Common myeloid progenitor, CD34-positive (primary cell): ENCODE measurements at regions of chr5 and their contacts with region 1.

Region 1: DNA sequence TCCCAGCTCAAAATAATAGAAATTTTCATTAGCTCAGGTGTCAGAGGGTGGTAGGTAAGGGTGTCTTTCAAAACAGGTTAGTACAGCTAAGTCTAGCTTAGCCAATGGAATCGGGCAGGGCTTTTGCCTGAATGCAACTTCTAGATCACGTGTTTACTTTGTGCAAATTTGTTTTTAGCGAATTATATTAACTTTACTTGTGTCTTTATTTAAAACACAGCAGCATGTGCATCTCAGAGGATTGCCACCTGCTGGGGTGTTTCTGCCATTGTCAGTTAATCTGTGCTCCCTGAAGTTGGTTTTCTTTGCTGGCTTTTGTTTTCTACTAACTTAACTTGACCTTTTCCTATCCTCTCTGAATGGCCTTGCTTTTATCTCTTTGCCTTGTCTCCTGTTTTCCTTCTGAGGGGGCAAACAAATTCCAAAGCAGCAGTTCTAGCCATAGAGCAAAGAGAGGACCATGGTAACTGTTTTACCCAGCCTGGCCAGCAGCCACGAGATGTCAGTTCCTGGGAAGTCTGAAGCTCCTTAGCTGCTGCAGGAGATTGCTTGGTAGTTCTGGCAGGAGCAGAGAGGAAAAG is 67.6 kb downstream of the ARHGEF28 start:
- DNase-seq: peak; percentile 36 to 61 (median 54)
- H3K4me3 ChIP-seq: no peak overlapping the region
- H3K27ac ChIP-seq: no peak overlapping the region
- H3K4me1 ChIP-seq: peaks cover 0 to 8% (median 5%) of the 10 kb centered on the region in 4 experiments
- H3K27me3 ChIP-seq: no peaks in the 10 kb centered on the region

Region 2: GRCh38 chr5:73596705-73597328 is 96.8 kb before region 1 on chr5:
- CTCF ChIA-PET with region 1: interaction called, 50 read pairs
- POLR2A ChIA-PET with region 1: no interaction called
- DNase-seq: peak; percentile 58 to 71 (median 66)
- H3K4me3 ChIP-seq: no peak overlapping the region
- H3K27ac ChIP-seq: no peak overlapping the region
- H3K4me1 ChIP-seq: no peaks in the 10 kb centered on the region
- H3K27me3 ChIP-seq: no peaks in the 10 kb centered on the region

Region 3: DNA sequence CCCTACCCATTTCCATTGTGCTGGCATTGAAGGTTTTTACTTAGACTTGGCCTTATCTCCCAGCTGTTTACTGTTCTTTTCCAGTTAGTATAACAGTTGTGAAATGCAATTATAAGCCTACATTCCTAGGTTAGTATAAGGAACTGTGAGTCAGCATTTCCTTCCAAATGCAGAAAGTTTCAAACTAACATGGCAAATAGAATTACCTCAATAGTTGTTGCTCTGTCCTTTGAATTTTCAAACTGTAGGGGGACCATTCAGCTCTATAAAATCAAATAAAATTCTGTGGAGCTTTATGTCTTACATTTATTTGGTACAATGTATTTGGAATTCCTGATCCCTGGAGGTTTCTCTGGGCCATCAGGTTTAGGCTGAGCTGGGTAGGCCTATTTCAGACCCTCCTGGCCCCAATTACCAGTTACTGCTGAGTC is 20.4 kb before region 1 on chr5:
- CTCF ChIA-PET with region 1: interaction called, 22 read pairs
- POLR2A ChIA-PET with region 1: no interaction called
- DNase-seq: peak; percentile 36 to 81 (median 74)
- H3K4me3 ChIP-seq: no peak overlapping the region
- H3K27ac ChIP-seq: peak overlapping the region in 1 of 2 experiments; percentile 38
- H3K4me1 ChIP-seq: peaks cover 0 to 17% (median 5%) of the 10 kb centered on the region in 4 experiments
- H3K27me3 ChIP-seq: no peaks in the 10 kb centered on the region

Region 4: GRCh38 chr5:73705364-73705763 is 11.8 kb after region 1 on chr5:
- CTCF ChIA-PET with region 1: interaction called, 16 read pairs
- POLR2A ChIA-PET with region 1: interaction called, 3 read pairs
- DNase-seq: no peak
- H3K4me3 ChIP-seq: no peak overlapping the region
- H3K27ac ChIP-seq: no peak overlapping the region
- H3K4me1 ChIP-seq: no peaks in the 10 kb centered on the region
- H3K27me3 ChIP-seq: no peaks in the 10 kb centered on the region

Region 5: DNA sequence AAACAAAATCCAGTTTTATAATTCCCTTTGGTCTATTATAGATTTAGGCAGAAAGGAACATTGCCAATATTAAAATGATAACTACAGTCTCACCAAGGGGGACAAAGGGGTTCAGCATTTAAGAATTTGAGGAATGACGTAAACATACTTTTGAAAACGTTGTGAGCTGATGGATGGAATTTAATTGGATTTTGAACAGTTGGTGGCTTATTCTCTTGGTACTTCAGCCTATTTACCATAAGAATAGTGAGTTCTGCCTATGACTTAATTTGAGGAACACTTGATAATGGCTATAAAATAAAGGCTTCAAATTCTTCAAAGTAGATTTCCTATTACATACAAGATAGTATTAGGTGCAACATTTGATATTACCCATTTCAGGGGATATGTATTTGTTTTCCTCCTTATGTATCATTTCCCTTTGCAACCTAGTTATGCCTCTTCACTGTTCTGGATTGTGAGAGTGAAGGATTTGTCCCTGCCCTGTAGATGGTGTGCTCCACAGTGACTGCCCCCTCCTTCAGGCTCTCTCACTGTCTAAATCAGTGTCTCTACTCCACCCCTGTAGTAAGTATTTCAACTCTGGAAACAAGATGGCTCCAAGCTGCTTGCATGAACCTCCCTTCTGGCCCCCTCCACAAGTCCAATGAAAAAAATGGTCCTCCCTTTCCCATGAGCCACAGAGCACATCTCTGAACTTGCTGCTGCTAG is 158.1 kb after region 1 on chr5:
- CTCF ChIA-PET with region 1: no interaction called
- POLR2A ChIA-PET with region 1: no interaction called
- DNase-seq: no peak
- H3K4me3 ChIP-seq: no peak overlapping the region
- H3K27ac ChIP-seq: no peak overlapping the region
- H3K4me1 ChIP-seq: no peaks in the 10 kb centered on the region
- H3K27me3 ChIP-seq: no peaks in the 10 kb centered on the region